ENCODE measurements at regions of chr17 and their contacts with region 1.

Region 1: DNA sequence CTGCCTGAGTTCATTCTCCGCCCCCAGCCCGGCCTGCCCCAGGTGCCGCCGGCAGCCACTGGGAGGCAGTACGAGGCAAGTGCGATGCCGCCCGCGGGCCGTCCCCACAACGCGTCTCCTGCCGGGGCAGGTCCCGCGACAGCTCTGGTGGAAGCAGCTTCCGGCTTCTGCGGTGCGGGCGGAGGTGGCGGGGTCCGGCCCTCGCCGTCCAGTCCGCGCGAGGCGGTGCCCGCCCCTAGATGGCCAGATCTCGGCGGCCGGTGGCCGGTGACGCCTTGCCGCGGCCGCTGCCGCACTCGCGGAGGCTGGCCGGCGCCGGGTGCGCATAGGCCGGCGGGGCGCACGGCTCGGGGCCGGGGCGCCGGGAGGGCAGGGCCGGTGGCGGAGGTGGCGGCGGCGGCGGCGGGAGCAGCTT is 1.8 kb downstream of the GJD3 start:
- DNase-seq: no peak
- ATAC-seq: peak; percentile 95
- H3K4me3 ChIP-seq: peak overlapping the region; percentile 65; the same call in 1 of the 2 replicates
- H3K27ac ChIP-seq: no peak overlapping the region
- H3K4me1 ChIP-seq: no peaks in the 10 kb centered on the region; the same call in none of the 2 replicates
- H3K27me3 ChIP-seq: peaks cover 0 to 2% of the 10 kb centered on the region in 2 experiments; a peak in 1 of 4 replicates
- CTCF ChIP-seq: peak; percentile 85
- EP300 ChIP-seq: no peak
- POLR2A ChIP-seq: peak; percentile 78
- RAD21 ChIP-seq: peak; percentile 64

Region 2: DNA sequence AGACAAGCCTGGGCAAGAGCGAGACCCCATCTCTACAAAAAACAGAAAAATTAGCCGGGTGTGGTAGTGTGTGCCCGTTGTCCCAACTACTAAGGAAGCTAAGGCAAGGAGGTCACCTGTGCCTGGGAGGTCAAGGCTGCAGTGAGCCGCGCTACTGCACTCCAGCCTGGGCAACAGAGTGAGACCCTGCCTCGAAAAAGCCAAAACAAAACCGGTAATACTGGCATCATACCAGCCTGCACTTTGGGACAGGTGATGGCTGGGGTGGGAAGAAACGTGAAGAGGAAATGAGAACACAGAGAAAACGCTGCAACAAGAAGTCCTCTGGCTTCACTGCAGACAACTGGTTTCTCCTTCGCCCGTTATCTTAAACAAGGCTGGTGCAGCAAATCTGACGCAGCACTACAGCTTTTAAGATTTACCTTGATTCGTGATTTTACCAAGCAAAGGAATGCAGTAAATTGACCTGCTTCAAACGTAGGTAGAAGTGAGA is 223.1 kb before region 1 on chr17:
- CTCF ChIA-PET with region 1: no interaction called
- POLR2A ChIA-PET with region 1: no interaction called
- RAD21 ChIA-PET with region 1: no interaction called
- SMC1A ChIA-PET with region 1: no interaction called
- in situ Hi-C with region 1: no loop called
- intact Hi-C with region 1: no loop called
- DNase-seq: no peak
- ATAC-seq: peak; percentile 20
- H3K4me3 ChIP-seq: peak overlapping the region; percentile 76
- H3K27ac ChIP-seq: peak overlapping the region; percentile 97
- H3K4me1 ChIP-seq: peaks cover 2% of the 10 kb centered on the region; the same call in 1 of the 2 replicates
- H3K27me3 ChIP-seq: no peaks in the 10 kb centered on the region
- CTCF ChIP-seq: no peak
- EP300 ChIP-seq: no peak
- POLR2A ChIP-seq: no peak
- RAD21 ChIP-seq: no peak

Region 3: DNA sequence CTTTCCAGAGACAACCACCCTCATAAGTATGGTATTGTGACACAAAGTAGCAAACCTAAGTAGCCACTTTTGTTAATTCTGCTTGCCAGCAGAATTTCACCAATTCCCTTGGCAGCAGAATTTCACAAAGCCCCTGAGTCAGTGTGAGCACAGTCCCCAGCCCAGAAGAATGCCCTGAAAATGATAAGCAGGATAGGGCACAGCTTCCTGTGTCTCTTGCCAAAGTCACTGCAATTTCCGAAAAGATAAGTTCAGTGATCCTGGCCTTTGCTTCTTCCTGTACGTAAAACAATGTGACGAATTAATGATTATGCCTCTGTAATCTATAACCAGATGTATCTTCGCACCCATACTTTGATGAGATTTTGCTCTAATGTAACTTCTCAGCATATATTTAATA is 159.6 kb before region 1 on chr17:
- CTCF ChIA-PET with region 1: no interaction called
- POLR2A ChIA-PET with region 1: no interaction called
- RAD21 ChIA-PET with region 1: no interaction called
- SMC1A ChIA-PET with region 1: no interaction called
- in situ Hi-C with region 1: no loop called
- intact Hi-C with region 1: loop called (anchors 5 kb)
- DNase-seq: no peak
- ATAC-seq: no peak
- H3K4me3 ChIP-seq: no peak overlapping the region
- H3K27ac ChIP-seq: no peak overlapping the region
- H3K4me1 ChIP-seq: no peaks in the 10 kb centered on the region
- H3K27me3 ChIP-seq: no peaks in the 10 kb centered on the region
- CTCF ChIP-seq: no peak
- EP300 ChIP-seq: no peak
- POLR2A ChIP-seq: no peak
- RAD21 ChIP-seq: no peak

Region 4: DNA sequence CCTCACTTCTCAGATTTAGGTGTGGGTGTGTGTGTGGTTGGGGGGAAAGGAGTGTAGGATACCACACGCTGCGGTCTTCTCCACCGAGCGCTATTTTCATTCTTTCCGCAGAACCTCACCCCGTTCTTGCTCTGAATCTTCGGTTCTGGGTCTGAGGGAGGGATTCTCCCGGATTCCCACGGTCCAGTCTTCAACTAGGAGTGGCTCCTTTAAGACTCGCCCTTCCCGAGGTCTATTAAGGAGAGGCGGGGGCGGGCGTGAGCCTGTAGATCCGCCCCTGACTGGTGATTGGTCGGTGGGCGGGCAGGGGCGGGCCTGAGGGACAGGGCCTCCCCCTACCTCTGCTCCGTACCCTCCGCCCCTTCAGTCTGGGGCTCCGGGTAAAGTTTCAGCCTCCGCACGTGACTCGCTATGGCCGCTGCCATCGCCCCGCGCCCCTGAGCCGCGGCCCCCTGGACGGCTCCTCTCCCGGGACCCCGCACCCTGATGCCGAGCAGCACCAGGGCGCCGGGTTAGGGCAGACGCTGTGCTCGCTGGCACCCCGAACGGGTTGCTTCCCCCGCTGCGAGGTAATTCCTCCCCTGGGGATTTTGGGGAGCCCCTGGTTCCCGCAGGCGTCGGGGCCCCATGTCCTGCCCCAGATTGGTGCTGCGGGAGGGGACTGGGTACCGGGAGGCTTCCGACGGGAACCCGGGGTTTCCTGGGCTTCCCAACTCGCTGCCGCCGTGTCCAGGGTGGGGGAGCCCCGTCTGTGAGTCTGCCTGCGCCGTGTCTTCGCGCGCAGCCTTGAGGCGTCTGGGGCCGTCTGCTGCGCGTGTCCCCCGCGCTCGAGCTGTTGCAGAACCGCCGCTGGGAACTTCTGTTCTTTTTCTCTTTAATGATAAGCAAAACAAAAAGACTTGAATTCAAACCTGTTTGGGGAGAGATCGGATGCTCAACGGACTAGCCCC is 44.5 kb before region 1 on chr17:
- CTCF ChIA-PET with region 1: interaction called, 6 read pairs
- POLR2A ChIA-PET with region 1: no interaction called
- RAD21 ChIA-PET with region 1: interaction called, 271 read pairs
- SMC1A ChIA-PET with region 1: interaction called, 3 read pairs
- in situ Hi-C with region 1: no loop called
- intact Hi-C with region 1: loop called (anchors 5 kb)
- DNase-seq: peak; percentile 79
- ATAC-seq: peak; percentile 83
- H3K4me3 ChIP-seq: peak overlapping the region; percentile 91
- H3K27ac ChIP-seq: peak overlapping the region; percentile 96
- H3K4me1 ChIP-seq: peaks cover 44% of the 10 kb centered on the region
- H3K27me3 ChIP-seq: no peaks in the 10 kb centered on the region
- CTCF ChIP-seq: no peak
- EP300 ChIP-seq: no peak; a peak in 1 of 4 replicates
- POLR2A ChIP-seq: peak; percentile 79
- RAD21 ChIP-seq: no peak

Region 5: DNA sequence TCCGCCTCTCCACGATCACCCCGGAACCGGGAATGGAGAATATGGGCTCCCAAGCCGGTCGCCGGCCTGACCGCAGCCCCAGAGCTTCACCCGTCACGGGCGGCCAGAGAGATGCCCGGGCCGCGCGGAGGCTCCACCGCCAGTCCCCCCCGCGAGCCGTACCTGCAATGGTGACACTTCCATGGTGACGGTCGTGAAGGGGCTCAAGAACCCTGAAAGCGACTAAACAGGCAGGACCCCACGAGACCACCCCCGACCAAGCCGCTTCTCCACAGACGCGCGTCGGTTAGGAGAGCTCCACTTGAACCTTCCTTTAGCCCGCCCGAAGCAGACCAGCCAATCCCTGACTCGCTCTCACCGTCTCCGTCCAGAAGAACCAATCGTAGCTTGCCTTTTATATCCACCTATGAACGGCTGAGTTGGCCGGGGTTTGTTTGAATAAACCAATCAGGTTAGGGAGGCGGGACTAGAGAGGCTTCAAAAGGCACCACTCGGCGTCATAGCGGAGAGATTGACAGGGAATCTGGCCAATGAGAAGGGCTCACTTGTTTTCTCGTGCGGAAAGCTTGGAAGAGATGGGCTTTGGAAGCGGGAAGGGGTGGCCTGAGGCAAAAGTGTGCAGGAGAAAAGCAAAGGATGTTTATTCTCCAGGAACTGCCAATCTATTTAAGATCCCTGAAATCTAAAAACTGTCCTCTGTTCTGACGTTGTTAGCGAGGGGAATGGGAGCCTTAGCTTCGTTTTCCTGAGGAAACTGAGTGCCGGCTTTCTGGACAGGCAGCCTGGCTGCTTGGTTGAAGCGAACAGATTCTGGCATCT is 55.1 kb after region 1 on chr17 and contains the start of gene TOP2A:
- CTCF ChIA-PET with region 1: interaction called, 24 read pairs
- POLR2A ChIA-PET with region 1: no interaction called
- RAD21 ChIA-PET with region 1: interaction called, 4 read pairs
- SMC1A ChIA-PET with region 1: interaction called, 6 read pairs
- in situ Hi-C with region 1: no loop called
- intact Hi-C with region 1: no loop called
- DNase-seq: peak; percentile 99
- ATAC-seq: peak; percentile 97
- H3K4me3 ChIP-seq: peak within 1 kb of the TSS; percentile 94
- H3K27ac ChIP-seq: peak within 1 kb of the TSS; percentile 62
- H3K4me1 ChIP-seq: no peaks in the 10 kb centered on the region; the same call in 1 of the 2 replicates
- H3K27me3 ChIP-seq: no peaks in the 10 kb centered on the region; a peak in 1 of 4 replicates
- CTCF ChIP-seq: no peak
- EP300 ChIP-seq: no peak
- POLR2A ChIP-seq: peak; percentile 91
- RAD21 ChIP-seq: no peak
- polyA plus RNA-seq, gene TOP2A: 149 to 236 TPM

Region 6: GRCh38 chr17:40457964-40458791 is 95.5 kb after region 1 on chr17:
- CTCF ChIA-PET with region 1: no interaction called
- POLR2A ChIA-PET with region 1: no interaction called
- RAD21 ChIA-PET with region 1: no interaction called
- SMC1A ChIA-PET with region 1: no interaction called
- in situ Hi-C with region 1: no loop called
- intact Hi-C with region 1: no loop called
- DNase-seq: no peak
- ATAC-seq: no peak
- H3K4me3 ChIP-seq: no peak overlapping the region
- H3K27ac ChIP-seq: no peak overlapping the region
- H3K4me1 ChIP-seq: no peaks in the 10 kb centered on the region
- H3K27me3 ChIP-seq: no peaks in the 10 kb centered on the region; a peak in 1 of 4 replicates
- CTCF ChIP-seq: no peak
- EP300 ChIP-seq: no peak
- POLR2A ChIP-seq: no peak
- RAD21 ChIP-seq: no peak

Region 7: GRCh38 chr17:40474419-40475002 is 111.8 kb after region 1 on chr17:
- CTCF ChIA-PET with region 1: interaction called, 12 read pairs
- POLR2A ChIA-PET with region 1: no interaction called
- RAD21 ChIA-PET with region 1: interaction called, 3 read pairs
- SMC1A ChIA-PET with region 1: no interaction called
- in situ Hi-C with region 1: no loop called
- intact Hi-C with region 1: no loop called
- DNase-seq: no peak
- ATAC-seq: no peak
- H3K4me3 ChIP-seq: no peak overlapping the region
- H3K27ac ChIP-seq: no peak overlapping the region
- H3K4me1 ChIP-seq: no peaks in the 10 kb centered on the region
- H3K27me3 ChIP-seq: no peaks in the 10 kb centered on the region
- CTCF ChIP-seq: no peak
- EP300 ChIP-seq: no peak
- POLR2A ChIP-seq: no peak
- RAD21 ChIP-seq: no peak

Region 8: DNA sequence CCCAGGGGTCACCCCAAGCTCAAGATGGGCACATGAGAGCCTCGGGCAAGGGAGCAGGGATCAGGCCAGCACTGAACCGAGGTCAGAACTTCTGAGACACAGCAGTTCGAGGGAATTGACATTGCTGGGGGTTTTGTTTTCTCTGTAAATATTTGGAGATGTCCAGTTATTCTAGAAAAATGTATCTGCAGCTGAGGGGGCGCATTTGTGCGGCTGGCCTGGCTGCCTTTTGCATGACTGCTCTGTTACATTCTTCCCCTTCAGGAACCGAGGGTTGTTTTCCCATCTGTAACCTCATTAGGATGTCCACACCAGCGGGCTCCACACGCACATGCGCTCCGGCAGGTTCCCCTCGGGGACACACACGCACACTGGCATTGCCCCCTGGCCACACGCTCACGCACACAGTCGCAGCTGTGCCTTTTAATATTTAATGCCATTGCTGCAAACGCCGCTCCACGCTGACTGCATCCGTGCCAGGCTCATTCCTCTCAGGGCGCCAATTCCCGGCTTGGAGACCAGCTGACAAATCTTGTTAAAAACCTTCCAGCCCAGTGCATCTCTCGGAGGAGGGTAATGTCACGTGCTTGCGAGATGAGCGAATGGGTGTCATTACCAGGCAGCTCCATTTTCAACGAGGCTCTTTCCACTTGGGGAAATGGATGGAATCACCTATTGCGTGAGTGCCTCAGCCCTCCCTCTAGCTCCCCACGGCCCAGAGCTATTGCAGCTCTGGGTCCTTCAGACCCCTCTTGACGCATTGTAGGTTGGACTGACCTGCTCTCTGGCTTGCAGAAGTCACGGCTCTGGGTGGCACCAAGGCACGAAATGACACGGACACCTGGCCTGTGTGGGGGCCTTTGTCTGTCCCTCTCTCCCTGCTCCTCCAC is 189.4 kb after region 1 on chr17:
- CTCF ChIA-PET with region 1: no interaction called
- POLR2A ChIA-PET with region 1: no interaction called
- RAD21 ChIA-PET with region 1: interaction called, 3 read pairs
- SMC1A ChIA-PET with region 1: no interaction called
- in situ Hi-C with region 1: no loop called
- intact Hi-C with region 1: loop called (anchors 5 kb)
- DNase-seq: no peak
- ATAC-seq: peak; percentile 5
- H3K4me3 ChIP-seq: no peak overlapping the region
- H3K27ac ChIP-seq: no peak overlapping the region
- H3K4me1 ChIP-seq: peaks cover 45% of the 10 kb centered on the region
- H3K27me3 ChIP-seq: no peaks in the 10 kb centered on the region
- CTCF ChIP-seq: no peak
- EP300 ChIP-seq: no peak
- POLR2A ChIP-seq: peak; percentile 82
- RAD21 ChIP-seq: no peak